Vagina (tissue), 2 donors: ENCODE measurements at regions of chr3 and their contacts with region 1.

Region 1: GRCh38 chr3:179322286-179323196 is at the start of gene ZNF639:
- DNase-seq: peak in 1 of 2 donors; percentile 92
- H3K4me3 ChIP-seq: peak within 1 kb of the TSS; percentile 58 to 88
- H3K27ac ChIP-seq: peak within 1 kb of the TSS; percentile 97
- H3K4me1 ChIP-seq: peaks cover 31% of the 10 kb centered on the region
- H3K27me3 ChIP-seq: no peaks in the 10 kb centered on the region
- CTCF ChIP-seq: peak; percentile 65 to 82 (median 72)
- POLR2A ChIP-seq: peak in 1 of 2 donors; percentile 88
- total RNA-seq, gene ZNF639: 37.3 TPM

Region 2: DNA sequence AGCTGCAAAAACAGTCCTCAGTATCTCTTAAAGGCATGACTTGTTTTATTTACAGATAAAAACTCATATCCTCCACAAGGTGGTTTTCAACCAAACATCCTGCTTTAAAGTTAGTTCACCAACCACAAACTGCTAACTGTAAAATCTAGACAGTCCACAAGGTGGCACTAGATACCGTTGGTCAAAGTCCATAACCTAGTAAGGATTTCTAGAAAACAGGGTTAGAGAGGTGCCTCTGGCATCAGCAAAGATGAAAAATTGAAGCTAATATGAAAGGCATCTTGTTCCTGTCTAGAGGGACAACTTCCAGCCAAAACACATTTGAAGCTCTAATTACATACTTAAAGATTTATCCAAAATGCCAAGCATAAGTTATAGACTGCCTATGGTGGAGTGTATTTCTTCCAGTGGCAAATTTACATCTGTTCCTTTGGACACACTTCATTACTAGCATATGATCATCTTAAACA is 307.0 kb before region 1 on chr3:
- intact Hi-C with region 1: loop called (anchors 2 kb)
- DNase-seq: no peak
- H3K4me3 ChIP-seq: no peak overlapping the region
- H3K27ac ChIP-seq: no peak overlapping the region
- H3K4me1 ChIP-seq: peaks cover 9% of the 10 kb centered on the region
- H3K27me3 ChIP-seq: no peaks in the 10 kb centered on the region
- CTCF ChIP-seq: peak; percentile 79 to 86 (median 83)
- POLR2A ChIP-seq: no peak

Region 3: GRCh38 chr3:179027326-179027900 is 295.1 kb before region 1 on chr3:
- intact Hi-C with region 1: no loop called
- DNase-seq: no peak
- H3K4me3 ChIP-seq: no peak overlapping the region
- H3K27ac ChIP-seq: no peak overlapping the region
- H3K4me1 ChIP-seq: no peaks in the 10 kb centered on the region
- H3K27me3 ChIP-seq: no peaks in the 10 kb centered on the region
- CTCF ChIP-seq: no peak
- POLR2A ChIP-seq: no peak

Region 4: DNA sequence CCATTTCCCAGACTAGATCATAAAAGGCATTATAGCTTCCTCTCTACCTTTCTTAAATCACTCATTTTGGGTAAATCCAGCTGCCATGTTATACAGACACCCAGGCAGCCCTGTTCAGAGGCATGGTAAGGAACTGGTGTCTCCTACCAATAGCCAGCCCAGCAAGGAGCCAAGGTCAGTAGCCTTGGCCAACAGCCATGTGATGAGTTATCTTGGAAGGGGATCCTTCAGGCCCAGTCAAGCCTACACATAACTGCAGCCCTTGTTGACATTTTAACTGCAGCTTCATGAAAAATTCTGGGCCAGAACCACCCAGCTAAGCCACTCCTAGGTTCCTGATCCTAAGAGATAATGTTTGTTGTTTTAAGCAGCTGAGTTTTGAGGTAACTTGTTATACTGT is 221.9 kb before region 1 on chr3:
- intact Hi-C with region 1: loop called (anchors 10 kb)
- DNase-seq: no peak
- H3K4me3 ChIP-seq: no peak overlapping the region
- H3K27ac ChIP-seq: no peak overlapping the region
- H3K4me1 ChIP-seq: no peaks in the 10 kb centered on the region
- H3K27me3 ChIP-seq: no peaks in the 10 kb centered on the region
- CTCF ChIP-seq: no peak
- POLR2A ChIP-seq: no peak

Region 5: DNA sequence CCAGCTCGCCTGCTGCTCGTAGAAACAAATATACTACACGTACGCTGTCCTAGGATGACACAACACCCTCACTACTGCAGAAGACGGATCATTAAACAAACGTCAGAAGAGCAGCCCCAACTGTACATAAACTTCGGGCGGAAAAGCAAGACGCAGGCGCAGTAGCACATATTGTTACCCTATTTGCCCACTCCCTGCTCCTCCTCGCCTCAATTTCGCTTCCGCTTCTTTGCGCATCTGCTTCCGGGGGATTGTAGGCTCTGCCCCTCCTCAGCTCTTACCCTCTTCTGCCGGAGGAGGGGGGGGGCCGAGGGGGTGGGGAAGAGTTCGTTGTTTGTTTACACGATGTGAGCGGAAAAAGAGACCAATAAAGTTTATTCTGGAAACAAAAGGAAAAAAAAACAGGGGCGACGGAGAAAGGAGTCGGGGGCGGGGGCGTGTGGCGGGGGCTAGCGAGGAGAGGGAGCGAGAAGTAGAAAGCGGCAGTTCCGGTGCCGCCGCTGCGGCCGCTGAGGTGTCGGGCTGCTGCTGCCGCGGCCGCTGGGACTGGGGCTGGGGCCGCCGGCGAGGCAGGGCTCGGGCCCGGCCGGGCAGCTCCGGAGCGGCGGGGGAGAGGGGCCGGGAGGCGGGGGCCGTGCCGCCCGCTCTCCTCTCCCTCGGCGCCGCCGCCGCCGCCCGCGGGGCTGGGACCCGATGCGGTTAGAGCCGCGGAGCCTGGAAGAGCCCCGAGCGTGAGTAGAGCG is 174.5 kb before region 1 on chr3 and contains the start of gene PIK3CA:
- intact Hi-C with region 1: loop called (anchors 2 kb)
- DNase-seq: peak in 1 of 2 donors; percentile 99
- H3K4me3 ChIP-seq: peak within 1 kb of the TSS; percentile 74 to 99
- H3K27ac ChIP-seq: peak within 1 kb of the TSS; percentile 99
- H3K4me1 ChIP-seq: peaks cover 39% of the 10 kb centered on the region
- H3K27me3 ChIP-seq: no peaks in the 10 kb centered on the region
- CTCF ChIP-seq: no peak
- POLR2A ChIP-seq: peak in 1 of 2 donors; percentile 49
- total RNA-seq, gene PIK3CA: 20.1 TPM